Activated naive CD4-positive, alpha-beta T cell treated with anti-CD3 and anti-CD28 coated beads for 36 hours (primary cell): ENCODE measurements at regions of chr2 and their contacts with region 1.

Region 1: GRCh38 chr2:215949991-215950404 is 63.4 kb downstream of the MREG start:
- DNase-seq: no peak
- H3K4me3 Mint-ChIP-seq: no peak overlapping the region
- H3K27ac Mint-ChIP-seq: no peak overlapping the region
- H3K4me1 Mint-ChIP-seq: no peaks in the 10 kb centered on the region
- H3K27me3 Mint-ChIP-seq: no peaks in the 10 kb centered on the region

Region 2: GRCh38 chr2:215998636-215999035 is 48.6 kb after region 1 on chr2:
- CTCF ChIA-PET with region 1: no interaction called
- intact Hi-C with region 1: no loop called
- DNase-seq: no peak
- H3K4me3 Mint-ChIP-seq: no peak overlapping the region
- H3K27ac Mint-ChIP-seq: no peak overlapping the region
- H3K4me1 Mint-ChIP-seq: peaks cover 14% of the 10 kb centered on the region
- H3K27me3 Mint-ChIP-seq: no peaks in the 10 kb centered on the region

Region 3: GRCh38 chr2:216013080-216013909 is 63.3 kb after region 1 on chr2 and contains the start of gene MREG:
- CTCF ChIA-PET with region 1: interaction called, 5 read pairs
- intact Hi-C with region 1: loop called (anchors 1 kb)
- DNase-seq: peak; percentile 91
- H3K4me3 Mint-ChIP-seq: peak within 1 kb of the TSS; percentile 81
- H3K27ac Mint-ChIP-seq: no peak within 1 kb of the TSS
- H3K4me1 Mint-ChIP-seq: peaks cover 51% of the 10 kb centered on the region
- H3K27me3 Mint-ChIP-seq: no peaks in the 10 kb centered on the region
- total RNA-seq, gene MREG: 3.1 to 3.9 TPM

Region 4: DNA sequence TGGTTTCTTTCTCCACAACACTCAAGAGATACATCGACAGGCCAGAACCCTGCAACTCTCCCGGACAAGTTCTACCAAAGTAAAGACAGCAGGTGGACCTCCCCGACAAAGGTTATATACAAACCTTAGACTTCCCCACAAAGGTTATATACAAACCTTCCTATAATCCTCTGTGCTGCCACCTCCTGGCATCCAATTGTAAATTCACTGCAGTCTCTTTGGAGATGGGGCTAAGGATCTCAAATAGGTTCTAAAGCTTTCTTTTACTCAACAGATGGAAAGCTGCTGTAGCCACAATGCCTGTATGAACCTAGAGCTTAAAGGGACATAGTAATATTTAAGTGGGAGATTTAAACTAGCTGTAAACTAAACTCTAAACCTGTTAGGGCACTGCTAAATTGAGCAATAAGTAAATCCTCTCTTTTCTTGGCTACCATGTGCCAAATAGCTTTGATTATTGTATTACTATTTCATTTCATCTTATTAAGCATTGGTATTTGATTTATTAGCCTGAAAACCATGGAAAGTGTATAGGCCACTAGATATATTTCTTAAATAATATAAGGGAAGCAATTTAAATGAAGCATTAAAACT is 73.2 kb after region 1 on chr2:
- CTCF ChIA-PET with region 1: interaction called, 111 read pairs
- intact Hi-C with region 1: loop called (anchors 1 kb)
- DNase-seq: peak; percentile 67
- H3K4me3 Mint-ChIP-seq: no peak overlapping the region
- H3K27ac Mint-ChIP-seq: no peak overlapping the region
- H3K4me1 Mint-ChIP-seq: peaks cover 1% of the 10 kb centered on the region
- H3K27me3 Mint-ChIP-seq: no peaks in the 10 kb centered on the region

Region 5: GRCh38 chr2:216057688-216058193 is 107.7 kb after region 1 on chr2:
- CTCF ChIA-PET with region 1: no interaction called
- intact Hi-C with region 1: loop called (anchors 1 kb)
- DNase-seq: peak; percentile 66
- H3K4me3 Mint-ChIP-seq: peak overlapping the region; percentile 65
- H3K27ac Mint-ChIP-seq: peak overlapping the region; percentile 81
- H3K4me1 Mint-ChIP-seq: peaks cover 24% of the 10 kb centered on the region
- H3K27me3 Mint-ChIP-seq: no peaks in the 10 kb centered on the region

Region 6: GRCh38 chr2:216350214-216350789 is 400.3 kb after region 1 on chr2:
- CTCF ChIA-PET with region 1: no interaction called
- intact Hi-C with region 1: no loop called
- DNase-seq: peak; percentile 56
- H3K4me3 Mint-ChIP-seq: no peak overlapping the region
- H3K27ac Mint-ChIP-seq: peak overlapping the region; percentile 23
- H3K4me1 Mint-ChIP-seq: peaks cover 80% of the 10 kb centered on the region
- H3K27me3 Mint-ChIP-seq: no peaks in the 10 kb centered on the region